Dendritic cell treated with granulocyte-macrophage colony-stimulating factor and Interleukin-4, amounts not matched to agents 40 ng/mL and 50 ng/mL, for 4 days (primary cell): ENCODE measurements at regions of chr11 and their contacts with region 1.

Region 1: DNA sequence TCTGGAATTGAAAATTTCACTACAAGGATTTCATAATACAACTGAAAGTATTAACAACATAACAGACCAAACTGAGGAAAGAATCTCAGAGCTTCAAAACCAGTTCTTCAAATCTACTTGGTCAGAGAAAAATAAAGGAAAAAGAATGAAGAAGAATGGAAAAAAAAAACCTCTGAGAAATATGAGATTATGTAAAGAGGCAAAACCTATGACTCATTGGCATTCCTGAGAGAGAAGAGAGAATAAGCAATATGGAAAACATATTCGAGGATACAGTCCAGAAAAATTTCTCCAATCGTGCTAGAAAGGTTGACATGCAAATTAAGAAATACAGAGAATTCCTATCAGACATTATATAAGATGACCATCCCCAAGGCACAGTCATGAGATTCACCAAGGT is 23.4 kb upstream of the GPR83 start:
- H3K4me3 Mint-ChIP-seq: no peak overlapping the region
- H3K27ac Mint-ChIP-seq: no peak overlapping the region
- H3K4me1 Mint-ChIP-seq: no peaks in the 10 kb centered on the region
- H3K27me3 Mint-ChIP-seq: no peaks in the 10 kb centered on the region

Region 2: GRCh38 chr11:94171693-94172440 is 252.8 kb before region 1 on chr11:
- intact Hi-C with region 1: loop called (anchors 10 kb)
- H3K4me3 Mint-ChIP-seq: no peak overlapping the region
- H3K27ac Mint-ChIP-seq: no peak overlapping the region
- H3K4me1 Mint-ChIP-seq: peaks cover 18% of the 10 kb centered on the region
- H3K27me3 Mint-ChIP-seq: no peaks in the 10 kb centered on the region